T-cell (primary cell): ENCODE measurements at regions of chr2 and their contacts with region 1.

Region 1: DNA sequence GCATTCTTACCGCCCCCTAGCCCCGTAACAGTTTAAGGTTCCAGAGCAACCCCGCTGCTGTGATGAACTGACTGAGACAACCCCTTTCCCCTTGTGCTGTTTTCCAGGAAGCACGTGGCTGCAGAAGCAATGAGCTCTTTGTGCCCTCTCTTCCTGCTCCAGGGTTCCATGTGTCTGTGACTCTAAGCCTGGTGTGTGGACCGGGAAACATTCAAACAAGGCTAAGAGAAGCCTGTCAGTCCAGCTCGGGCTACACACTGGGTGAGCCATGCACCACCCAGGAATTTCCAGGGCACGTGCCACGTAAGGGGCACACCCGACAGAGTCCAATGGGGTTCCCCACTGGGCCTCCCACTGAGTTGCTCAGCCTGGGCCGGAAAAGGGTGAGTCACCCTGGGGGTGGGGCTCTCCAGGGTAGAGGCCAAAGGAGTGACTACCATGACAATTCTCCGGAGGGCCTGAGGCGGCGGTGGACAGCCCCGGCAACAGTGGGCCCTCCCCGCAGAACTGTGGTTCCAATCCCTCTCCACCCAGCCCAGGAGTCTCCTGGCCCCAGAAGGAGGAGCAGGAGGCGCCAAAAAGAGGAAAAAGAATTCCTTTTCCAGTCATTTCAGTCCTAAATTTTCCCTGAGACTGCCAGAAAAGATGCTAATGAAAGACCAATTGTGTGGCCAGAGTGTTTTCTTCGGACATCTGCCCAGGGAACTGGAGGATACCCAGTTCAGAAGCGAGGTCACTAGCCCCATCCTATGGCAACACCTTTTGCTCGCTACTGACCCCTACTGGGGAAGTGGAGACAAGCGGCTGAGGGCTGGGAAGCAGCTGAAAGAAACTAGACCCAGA is 157.8 kb upstream of the SLC1A4 start:
- DNase-seq: peak; percentile 44 to 88 (median 76)
- ATAC-seq: peak; percentile 87 to 89 (median 88)
- H3K4me3 ChIP-seq: peak overlapping the region in 1 of 2 donors; percentile 11
- H3K4me3 Mint-ChIP-seq: peak overlapping the region; percentile 18 to 47 (median 21)
- H3K27ac ChIP-seq: peak overlapping the region; percentile 8
- H3K27ac Mint-ChIP-seq: peak overlapping the region in 1 of 2 donors; percentile 20
- H3K4me1 ChIP-seq: peaks cover 0 to 10% of the 10 kb centered on the region in 2 experiments
- H3K4me1 Mint-ChIP-seq: peaks cover 0 to 11% (median 10%) of the 10 kb centered on the region in 3 donors
- H3K27me3 ChIP-seq: peaks cover 0 to 6% of the 10 kb centered on the region in 2 experiments
- H3K27me3 Mint-ChIP-seq: peaks cover 3 to 10% of the 10 kb centered on the region in 2 donors

Region 2: DNA sequence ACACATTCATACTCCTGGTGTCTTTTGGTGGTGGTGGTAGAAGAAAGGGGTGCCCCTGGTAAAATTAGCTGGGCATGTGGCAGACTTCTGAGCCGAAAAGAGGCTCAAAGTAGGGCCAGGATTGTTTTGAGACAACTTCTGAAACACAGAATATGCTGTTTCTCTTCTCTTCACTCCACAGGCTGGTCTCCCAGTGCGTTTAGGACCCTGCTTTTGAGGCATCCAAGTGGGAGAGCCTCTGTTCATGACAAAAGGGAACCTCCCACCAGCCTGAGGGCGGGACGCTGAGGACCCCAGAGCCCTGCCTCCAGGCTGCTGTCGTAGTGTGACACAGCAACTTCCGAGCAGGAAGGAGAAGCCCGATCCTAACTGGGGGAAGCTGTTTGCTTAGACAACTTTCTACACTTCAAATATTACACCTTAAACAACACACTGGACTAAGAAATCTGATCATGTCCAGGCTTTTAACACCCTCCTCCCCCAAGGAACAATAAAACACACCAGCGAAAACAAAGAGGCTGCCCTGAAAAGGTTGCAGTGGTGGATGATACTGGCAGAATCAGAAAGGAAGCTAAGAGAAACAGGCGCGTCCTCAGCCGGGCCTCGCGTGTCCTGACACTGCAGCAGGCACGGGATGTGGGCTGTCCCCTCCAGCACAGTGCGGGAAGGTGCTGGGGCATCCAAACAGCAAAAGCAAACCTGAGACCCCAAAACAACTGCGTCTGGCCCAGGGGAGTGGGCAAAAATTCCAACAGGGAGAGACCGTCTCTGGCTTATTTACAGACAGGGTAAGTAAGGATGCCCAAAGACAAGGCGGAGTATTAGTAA is 187.0 kb before region 1 on chr2:
- CTCF ChIA-PET with region 1: interaction called, 5 to 30 read pairs
- POLR2A ChIA-PET with region 1: no interaction called
- DNase-seq: peak in 34 of 35 experiments; percentile 24 to 72 (median 44)
- ATAC-seq: peak; percentile 79 to 82 (median 80)
- H3K4me3 ChIP-seq: peak overlapping the region; percentile 27 to 60
- H3K4me3 Mint-ChIP-seq: peak overlapping the region; percentile 81 to 82 (median 82)
- H3K27ac ChIP-seq: peak overlapping the region; percentile 56
- H3K27ac Mint-ChIP-seq: peak overlapping the region; percentile 87 to 89
- H3K4me1 ChIP-seq: peaks cover 46 to 53% of the 10 kb centered on the region in 2 experiments
- H3K4me1 Mint-ChIP-seq: peaks cover 86 to 95% (median 90%) of the 10 kb centered on the region in 3 donors
- H3K27me3 ChIP-seq: no peaks in the 10 kb centered on the region
- H3K27me3 Mint-ChIP-seq: no peaks in the 10 kb centered on the region

Region 3: GRCh38 chr2:64653349-64654062 is 177.8 kb before region 1 on chr2 and contains the start of gene SERTAD2:
- CTCF ChIA-PET with region 1: interaction called, 4 to 11 read pairs
- POLR2A ChIA-PET with region 1: no interaction called
- DNase-seq: peak; percentile 71 to 93 (median 85)
- ATAC-seq: peak; percentile 89 to 91 (median 90)
- H3K4me3 ChIP-seq: peak within 1 kb of the TSS; percentile 94 to 96
- H3K4me3 Mint-ChIP-seq: peak within 1 kb of the TSS; percentile 88 to 91 (median 89)
- H3K27ac ChIP-seq: peak within 1 kb of the TSS; percentile 86
- H3K27ac Mint-ChIP-seq: peak within 1 kb of the TSS; percentile 91 to 92
- H3K4me1 ChIP-seq: peaks cover 25 to 56% of the 10 kb centered on the region in 2 experiments
- H3K4me1 Mint-ChIP-seq: peaks cover 75 to 81% (median 76%) of the 10 kb centered on the region in 3 donors
- H3K27me3 ChIP-seq: no peaks in the 10 kb centered on the region
- H3K27me3 Mint-ChIP-seq: no peaks in the 10 kb centered on the region
- total RNA-seq, gene SERTAD2: 22.8 to 39.7 (median 27.4) TPM